Panc1 (cell line): ENCODE measurements at regions of chrX and their contacts with region 1.

Region 1: DNA sequence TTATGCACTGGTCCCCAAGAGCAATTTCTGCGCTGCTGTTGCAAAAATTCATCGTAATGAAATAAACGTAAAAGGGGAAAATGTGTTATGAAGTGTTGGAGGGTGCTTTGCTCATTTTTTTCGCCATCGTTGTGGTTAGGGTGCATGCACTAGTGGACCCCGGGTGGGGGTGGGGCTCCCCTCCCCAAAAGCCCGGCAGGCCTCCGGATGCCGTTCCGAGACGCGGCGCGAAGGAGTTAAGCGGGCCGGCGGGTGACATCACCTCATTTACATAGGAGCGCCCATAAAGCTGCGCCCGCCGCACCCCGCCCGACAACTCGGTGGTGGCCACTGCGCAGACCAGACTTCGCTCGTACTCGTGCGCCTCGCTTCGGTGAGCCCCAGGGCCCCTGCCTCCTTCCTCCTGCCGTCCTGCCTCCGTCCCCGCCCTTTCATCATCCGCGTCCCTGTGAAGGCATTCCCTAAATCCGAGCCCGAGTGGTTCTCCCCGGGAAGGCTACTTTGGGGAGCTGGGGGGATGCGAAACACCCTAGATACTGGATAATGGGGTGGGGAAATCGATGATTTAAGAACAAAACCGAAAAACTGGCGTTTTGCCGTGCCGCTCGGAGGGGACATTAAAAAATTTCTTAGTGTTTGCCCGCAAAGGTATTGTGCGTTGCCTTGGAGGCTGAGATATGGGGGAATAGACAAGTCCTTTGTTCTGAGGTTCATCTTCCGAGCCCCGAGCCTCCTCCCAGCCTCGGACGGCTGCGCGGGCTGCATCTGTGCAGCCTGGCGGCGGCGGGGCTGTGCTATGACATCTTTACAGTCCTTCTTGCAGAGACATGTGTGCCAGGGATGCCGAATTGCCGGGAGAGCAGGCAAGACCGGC is at the start of gene TMSB4X:
- DNase-seq: no peak
- ATAC-seq: peak; percentile 76
- H3K4me3 ChIP-seq: peak within 1 kb of the TSS; percentile 68 to 80
- H3K27ac ChIP-seq: peak within 1 kb of the TSS; percentile 96
- H3K4me1 ChIP-seq: peaks cover 12% of the 10 kb centered on the region
- H3K27me3 ChIP-seq: no peaks in the 10 kb centered on the region
- CTCF ChIP-seq: no peak
- total RNA-seq, gene TMSB4X: 2,928 TPM

Region 2: DNA sequence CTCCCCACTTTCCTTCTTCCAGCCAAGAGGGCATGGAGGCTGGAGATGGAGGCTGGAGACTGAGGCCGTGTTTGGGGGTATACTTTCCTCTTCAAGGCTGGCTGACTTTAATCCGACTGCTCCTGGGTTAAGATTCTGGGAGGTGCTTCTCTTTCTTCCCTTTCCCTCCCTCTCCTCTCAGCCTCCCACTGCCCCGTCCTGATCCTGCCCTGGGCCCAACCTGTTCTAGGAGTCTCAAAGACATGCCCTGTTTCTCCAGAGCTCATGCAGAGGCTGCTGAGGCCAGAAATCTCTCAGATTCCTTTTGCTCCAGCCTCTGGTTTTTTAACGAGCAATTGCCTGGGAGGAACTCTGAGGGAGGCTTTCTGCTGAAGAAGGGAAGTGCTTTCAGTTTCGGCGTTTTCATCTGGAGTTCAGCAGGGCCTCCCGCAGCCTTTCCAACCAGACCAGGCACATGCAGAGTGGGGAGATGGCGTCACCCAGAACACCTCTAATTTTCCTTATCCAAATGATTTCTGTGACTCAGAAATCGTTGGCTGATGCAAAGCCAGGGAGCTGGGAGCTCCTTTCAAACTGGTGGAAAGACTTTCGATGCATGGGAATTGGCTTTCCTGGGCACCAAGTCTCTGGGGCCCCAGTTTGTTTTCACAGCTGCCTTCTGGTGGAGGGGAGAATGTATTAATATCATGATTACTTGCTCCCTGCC is 103.9 kb after region 1 on chrX:
- CTCF ChIA-PET with region 1: no interaction called
- POLR2A ChIA-PET with region 1: no interaction called
- in situ Hi-C with region 1: no loop called
- intact Hi-C with region 1: loop called (anchors 10 kb)
- DNase-seq: no peak
- ATAC-seq: peak; percentile 79
- H3K4me3 ChIP-seq: no peak overlapping the region
- H3K27ac ChIP-seq: peak overlapping the region; percentile 82
- H3K4me1 ChIP-seq: peaks cover 3% of the 10 kb centered on the region; the same call in 1 of the 2 replicates
- H3K27me3 ChIP-seq: no peaks in the 10 kb centered on the region
- CTCF ChIP-seq: no peak

Region 3: DNA sequence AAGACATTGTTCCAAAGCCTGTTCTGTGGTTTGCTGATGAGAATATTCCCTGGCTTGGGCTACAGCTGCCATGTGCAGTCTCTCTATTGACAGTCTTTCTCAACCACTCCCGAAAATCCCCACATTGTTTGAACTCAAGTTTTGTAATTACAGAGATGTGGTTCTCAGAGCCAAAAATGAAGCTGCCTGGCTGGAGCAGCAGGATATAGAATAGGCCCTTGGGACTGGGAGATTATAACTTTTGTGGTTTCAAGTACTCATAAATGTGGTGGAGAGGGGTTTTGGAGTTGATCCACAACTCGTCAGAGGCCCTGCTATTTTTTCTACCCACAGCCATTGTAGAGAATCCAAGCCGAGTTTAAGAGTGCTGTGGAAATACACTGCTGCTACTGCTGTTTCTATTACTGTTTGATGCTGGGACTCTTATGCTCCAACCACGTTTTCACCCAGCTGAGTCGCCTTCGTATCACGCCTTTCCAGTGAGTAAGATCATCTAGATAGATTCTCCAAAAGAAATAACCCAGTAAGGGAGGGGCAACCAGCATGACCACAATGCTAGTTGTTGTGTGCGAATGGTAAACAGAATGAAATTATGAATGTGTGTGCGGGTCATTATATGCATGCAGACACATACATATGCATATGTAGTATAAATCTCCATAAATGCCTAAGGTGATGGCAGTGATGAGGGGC is 402.0 kb after region 1 on chrX:
- CTCF ChIA-PET with region 1: no interaction called
- POLR2A ChIA-PET with region 1: no interaction called
- in situ Hi-C with region 1: no loop called
- intact Hi-C with region 1: no loop called
- DNase-seq: no peak
- ATAC-seq: no peak
- H3K4me3 ChIP-seq: no peak overlapping the region
- H3K27ac ChIP-seq: no peak overlapping the region
- H3K4me1 ChIP-seq: no peaks in the 10 kb centered on the region
- H3K27me3 ChIP-seq: no peaks in the 10 kb centered on the region
- CTCF ChIP-seq: no peak

Region 4: GRCh38 chrX:13487731-13488523 is 512.9 kb after region 1 on chrX:
- CTCF ChIA-PET with region 1: no interaction called
- POLR2A ChIA-PET with region 1: no interaction called
- in situ Hi-C with region 1: no loop called
- intact Hi-C with region 1: loop called (anchors 10 kb)
- DNase-seq: peak; percentile 48
- ATAC-seq: peak; percentile 85
- H3K4me3 ChIP-seq: no peak overlapping the region
- H3K27ac ChIP-seq: peak overlapping the region; percentile 88
- H3K4me1 ChIP-seq: peaks cover 3% of the 10 kb centered on the region; the same call in 1 of the 2 replicates
- H3K27me3 ChIP-seq: no peaks in the 10 kb centered on the region
- CTCF ChIP-seq: peak; percentile 55